Cardiac septum (tissue), 1 donor: ENCODE measurements at regions of chr21 and their contacts with region 1.

Region 1: DNA sequence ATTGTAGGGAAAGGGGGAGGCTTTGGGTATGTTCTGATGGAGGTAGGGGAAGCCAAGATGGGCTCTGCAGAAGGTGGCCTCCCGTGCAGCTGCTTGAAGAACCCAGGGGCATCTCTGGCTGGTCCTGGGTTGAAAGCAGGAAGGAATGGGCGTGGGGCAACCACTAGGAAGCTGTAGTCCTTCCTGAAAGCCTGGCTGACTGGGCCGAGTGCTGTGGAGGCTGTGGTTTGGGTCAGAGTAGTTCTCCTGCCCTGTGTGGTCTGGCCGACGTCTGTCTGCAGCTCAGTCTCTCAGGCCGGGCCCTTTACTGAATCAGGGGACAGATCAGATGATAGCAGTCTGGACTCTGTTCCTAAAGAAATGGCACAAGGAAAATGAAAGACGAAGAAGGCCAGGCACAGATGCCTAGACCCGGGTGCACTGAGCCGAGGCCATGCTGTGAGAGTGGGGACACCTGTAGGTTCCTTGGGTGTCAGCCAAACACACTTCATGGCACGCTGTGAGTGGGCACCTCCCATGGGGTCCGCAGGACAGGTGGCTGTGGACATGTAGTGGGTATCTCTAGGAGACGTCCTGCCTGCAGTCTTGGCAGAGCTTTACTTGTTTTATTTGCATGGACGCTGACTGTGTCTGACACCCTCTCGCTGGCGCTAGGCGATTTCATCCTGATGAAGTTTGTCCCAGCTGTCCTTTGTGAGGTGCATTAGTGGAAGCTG is 87.0 kb downstream of the POFUT2 start:
- DNase-seq: no peak

Region 2: GRCh38 chr21:45152265-45152746 is 48.4 kb before region 1 on chr21:
- intact Hi-C with region 1: no loop called
- DNase-seq: peak; percentile 82

Region 3: DNA sequence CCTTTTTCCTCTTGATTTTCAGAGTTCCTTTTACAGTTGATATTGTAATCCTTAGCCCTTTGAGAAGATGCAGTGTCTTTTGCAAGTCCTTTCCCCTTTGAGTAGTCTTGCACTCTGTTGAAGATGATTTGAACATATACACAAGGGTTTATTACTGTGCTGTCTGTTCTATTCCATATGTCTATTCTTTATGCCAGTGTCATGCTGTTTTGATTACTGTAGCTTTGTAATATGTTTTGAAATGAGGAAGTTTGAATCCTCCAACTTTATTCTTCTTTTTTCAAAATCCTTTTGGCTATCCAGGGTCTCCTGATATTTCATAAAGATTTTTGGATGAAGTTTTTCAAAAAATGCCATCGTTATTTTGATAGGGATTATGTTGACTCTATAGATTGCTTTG is 14.0 kb before region 1 on chr21:
- intact Hi-C with region 1: loop called (anchors 1 kb)
- DNase-seq: no peak